ENCODE measurements at regions of chr3 and their contacts with region 1.

Region 1: DNA sequence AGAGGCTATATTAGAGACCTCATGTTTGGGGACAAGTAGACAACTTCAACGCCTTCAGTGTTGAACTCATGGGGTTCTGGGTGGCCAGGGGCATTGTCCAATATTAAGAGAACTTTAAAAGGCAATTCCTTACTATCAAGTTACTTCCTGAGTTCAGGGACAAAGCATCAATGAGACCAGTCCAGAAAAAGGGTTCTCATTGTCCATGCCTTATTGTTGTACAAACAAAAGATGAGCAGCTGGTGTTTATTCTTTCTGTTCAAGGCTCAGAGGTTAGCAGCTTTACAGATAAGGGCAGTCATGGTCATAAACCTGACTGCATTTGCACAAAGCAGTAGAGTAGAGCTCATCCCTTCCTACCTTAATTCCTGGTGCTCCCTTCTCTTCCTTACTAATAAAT is 18.5 kb upstream of the PDHB start:
- DNase-seq: no peak
- H3K4me3 ChIP-seq: no peak overlapping the region
- H3K27me3 ChIP-seq: peaks cover under 1% of the 10 kb centered on the region; the same call in 1 of the 2 replicates
- CTCF ChIP-seq: no peak

Region 2: DNA sequence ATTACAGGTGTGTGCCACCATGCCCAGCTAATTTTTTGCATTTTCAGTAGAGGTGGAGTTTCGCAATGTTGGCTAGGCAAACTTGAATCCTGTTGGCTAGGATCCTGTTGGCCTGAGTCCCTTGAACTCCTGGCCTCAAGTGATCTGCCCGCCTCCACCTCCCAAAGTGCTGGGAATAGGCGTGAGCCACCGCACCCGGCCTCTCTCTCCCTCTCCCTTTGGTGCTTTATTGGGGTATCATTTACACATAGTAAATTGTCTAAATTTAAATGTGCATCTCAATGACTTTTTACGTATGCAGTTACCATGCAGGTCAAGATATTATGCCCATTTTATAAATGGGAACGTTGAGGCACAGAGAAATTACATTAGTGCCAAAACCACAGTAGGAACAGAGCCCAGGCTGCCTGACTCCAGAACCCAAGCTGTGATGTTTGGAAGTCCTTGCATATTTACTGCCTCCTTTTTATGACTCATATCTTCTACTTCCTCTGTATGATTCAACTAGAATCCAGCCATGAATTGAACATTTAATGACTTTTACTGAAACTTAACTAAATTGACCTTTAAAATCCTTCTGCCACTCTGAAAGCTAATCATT is 180.2 kb before region 1 on chr3:
- CTCF ChIA-PET with region 1: no interaction called
- POLR2A ChIA-PET with region 1: no interaction called
- DNase-seq: peak; percentile 74
- H3K4me3 ChIP-seq: no peak overlapping the region
- H3K27me3 ChIP-seq: no peaks in the 10 kb centered on the region
- CTCF ChIP-seq: no peak

Region 3: DNA sequence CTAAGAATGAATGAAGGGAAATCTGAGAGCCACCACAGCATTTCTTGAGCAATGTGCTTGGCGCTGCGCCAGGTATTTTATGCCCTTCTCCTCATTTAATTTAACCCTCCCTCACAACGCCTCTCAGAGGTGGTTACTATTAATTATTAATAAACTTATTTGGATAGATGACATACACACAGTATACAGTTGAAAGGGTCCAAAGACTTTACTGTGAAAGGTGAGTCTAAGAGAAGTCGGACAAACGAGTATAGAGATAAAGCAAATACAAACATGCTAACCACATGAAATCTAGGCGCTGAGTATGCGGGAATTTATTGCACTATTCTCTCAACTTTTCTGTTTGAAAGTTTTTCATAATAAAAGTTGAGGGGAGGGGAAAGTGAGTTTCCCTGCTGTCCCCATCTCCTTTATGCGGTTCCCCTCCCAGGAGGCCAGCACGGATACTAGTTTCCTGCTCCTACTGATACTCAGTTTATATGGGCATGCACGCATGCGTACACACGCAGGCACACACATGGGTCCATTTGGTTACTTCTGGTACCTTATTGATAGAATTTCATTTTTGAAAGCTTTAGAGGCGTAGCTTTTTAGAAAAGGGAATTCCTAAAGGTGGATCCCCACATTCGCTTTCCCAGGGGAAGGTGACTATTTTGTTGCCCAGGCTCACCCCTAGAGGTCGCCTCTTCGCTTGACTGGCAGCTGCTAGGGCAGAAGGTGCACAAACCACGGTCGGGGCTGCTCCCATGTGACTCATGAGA is 11.2 kb after region 1 on chr3:
- CTCF ChIA-PET with region 1: interaction called, 15 read pairs
- POLR2A ChIA-PET with region 1: no interaction called
- DNase-seq: peak; percentile 41
- H3K4me3 ChIP-seq: no peak overlapping the region
- H3K27me3 ChIP-seq: peaks cover 2% of the 10 kb centered on the region; the same call in 1 of the 2 replicates
- CTCF ChIP-seq: peak; percentile 90

Region 4: DNA sequence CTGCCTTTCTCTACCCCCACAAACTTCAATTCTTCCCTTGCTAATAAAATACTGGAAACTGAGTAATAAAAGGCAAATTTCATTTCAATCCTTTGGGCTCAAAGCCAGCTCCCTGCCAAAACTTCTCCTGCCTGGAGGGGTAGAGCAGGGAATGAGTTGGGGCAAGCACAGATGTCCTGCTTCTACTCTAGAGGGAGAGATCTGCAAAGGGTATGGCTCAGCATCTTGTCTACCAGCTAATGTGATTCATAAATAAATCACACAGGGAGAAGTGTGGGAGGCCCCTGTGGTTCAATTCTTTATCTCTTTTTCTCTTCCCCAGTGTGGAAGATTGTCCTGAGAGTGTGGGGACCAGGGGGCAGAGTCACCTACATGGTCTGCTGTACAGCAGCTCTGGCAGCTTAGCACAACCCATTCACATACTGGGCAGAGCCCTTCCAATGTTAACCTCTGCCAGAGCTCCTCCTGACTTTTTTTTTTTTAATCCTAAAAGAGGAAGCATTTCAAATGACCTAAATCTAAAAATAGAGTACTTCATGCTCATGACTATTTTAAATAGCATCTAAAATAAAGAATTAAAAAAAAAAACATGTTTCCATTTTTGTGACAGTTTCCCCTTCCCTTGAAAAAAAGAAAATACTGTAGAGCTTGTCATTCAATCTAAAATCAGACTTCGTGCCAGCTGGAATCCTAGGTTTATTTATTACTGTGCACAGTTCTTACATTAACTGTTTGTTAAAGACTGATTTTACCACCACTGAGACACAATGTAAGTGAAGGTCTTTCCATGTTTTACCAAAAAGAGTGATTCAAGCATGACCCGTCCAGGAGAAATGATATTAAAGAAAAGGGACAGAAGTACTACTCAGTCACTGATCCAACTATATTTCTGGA is 1681.3 kb after region 1 on chr3:
- CTCF ChIA-PET with region 1: no interaction called
- POLR2A ChIA-PET with region 1: no interaction called
- DNase-seq: no peak
- H3K4me3 ChIP-seq: no peak overlapping the region
- H3K27me3 ChIP-seq: no peaks in the 10 kb centered on the region
- CTCF ChIP-seq: no peak